Pancreas (tissue), 10 donors: ENCODE measurements at regions of chr4 and their contacts with region 1.

Region 1: GRCh38 chr4:115851918-115852766 is 738.7 kb upstream of the NDST4 start:
- DNase-seq: peak in 5 of 6 donors; percentile 31 to 66 (median 36)
- ATAC-seq: peak; percentile 61 to 90 (median 85)
- H3K4me3 ChIP-seq: no peak overlapping the region
- H3K27ac ChIP-seq: no peak overlapping the region
- H3K4me1 ChIP-seq: no peaks in the 10 kb centered on the region
- H3K27me3 ChIP-seq: no peaks in the 10 kb centered on the region
- CTCF ChIP-seq: peak in 3 of 4 donors; percentile 25 to 47 (median 41)

Region 2: GRCh38 chr4:115090483-115091075 is 761.6 kb before region 1 on chr4:
- intact Hi-C with region 1: loop called in 1 of 3 experiments (anchors 10 kb)
- DNase-seq: no peak
- ATAC-seq: peak in 2 of 4 donors; percentile 51 to 64
- H3K4me3 ChIP-seq: no peak overlapping the region
- H3K27ac ChIP-seq: no peak overlapping the region
- H3K4me1 ChIP-seq: peaks cover 0 to 3% (median 0%) of the 10 kb centered on the region in 3 donors
- H3K27me3 ChIP-seq: no peaks in the 10 kb centered on the region
- CTCF ChIP-seq: peak; percentile 36 to 57 (median 42)